ENCODE measurements at regions of chr14 and their contacts with region 1.

Region 1: DNA sequence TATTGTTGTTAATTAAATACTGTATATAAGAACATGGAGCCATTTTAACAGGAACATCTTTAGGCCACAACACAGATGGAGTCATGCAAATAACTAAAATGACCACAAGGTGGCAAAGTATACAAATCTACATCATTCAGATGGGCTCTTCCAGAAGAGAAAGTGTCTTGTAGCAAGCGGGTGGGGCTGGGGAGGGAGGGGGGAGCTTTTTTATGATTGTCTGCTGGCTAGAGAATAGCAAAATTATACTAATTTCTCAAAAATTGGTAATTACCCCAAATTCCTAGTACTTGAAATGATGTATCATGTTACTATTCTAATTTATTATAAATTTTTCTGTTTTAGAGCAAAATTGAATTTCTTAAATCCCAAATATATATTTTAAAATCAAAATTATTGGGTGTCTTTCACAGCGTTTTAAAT is 378.7 kb downstream of the PRKD1 start:
- DNase-seq: no peak
- H3K4me3 Mint-ChIP-seq: no peak overlapping the region
- H3K27ac Mint-ChIP-seq: no peak overlapping the region
- H3K4me1 Mint-ChIP-seq: no peaks in the 10 kb centered on the region
- H3K27me3 Mint-ChIP-seq: no peaks in the 10 kb centered on the region

Region 2: GRCh38 chr14:29321646-29322045 is 227.3 kb before region 1 on chr14:
- CTCF ChIA-PET with region 1: no interaction called
- intact Hi-C with region 1: no loop called
- DNase-seq: no peak
- H3K4me3 Mint-ChIP-seq: no peak overlapping the region
- H3K27ac Mint-ChIP-seq: no peak overlapping the region
- H3K4me1 Mint-ChIP-seq: no peaks in the 10 kb centered on the region
- H3K27me3 Mint-ChIP-seq: no peaks in the 10 kb centered on the region

Region 3: GRCh38 chr14:29518335-29518734 is 30.6 kb before region 1 on chr14:
- CTCF ChIA-PET with region 1: no interaction called
- intact Hi-C with region 1: no loop called
- DNase-seq: no peak
- H3K4me3 Mint-ChIP-seq: no peak overlapping the region
- H3K27ac Mint-ChIP-seq: no peak overlapping the region
- H3K4me1 Mint-ChIP-seq: no peaks in the 10 kb centered on the region
- H3K27me3 Mint-ChIP-seq: no peaks in the 10 kb centered on the region

Region 4: GRCh38 chr14:30214461-30215090 is 665.6 kb after region 1 on chr14:
- CTCF ChIA-PET with region 1: interaction called, 4 read pairs
- intact Hi-C with region 1: loop called (anchors 1 kb)
- DNase-seq: peak; percentile 6
- H3K4me3 Mint-ChIP-seq: no peak overlapping the region
- H3K27ac Mint-ChIP-seq: no peak overlapping the region
- H3K4me1 Mint-ChIP-seq: no peaks in the 10 kb centered on the region
- H3K27me3 Mint-ChIP-seq: no peaks in the 10 kb centered on the region

Region 5: GRCh38 chr14:30443368-30444007 is 894.5 kb after region 1 on chr14:
- CTCF ChIA-PET with region 1: no interaction called
- intact Hi-C with region 1: loop called (anchors 10 kb)
- DNase-seq: no peak
- H3K4me3 Mint-ChIP-seq: no peak overlapping the region
- H3K27ac Mint-ChIP-seq: no peak overlapping the region
- H3K4me1 Mint-ChIP-seq: no peaks in the 10 kb centered on the region
- H3K27me3 Mint-ChIP-seq: peaks cover 2% of the 10 kb centered on the region

Measured in activated naive CD4-positive, alpha-beta T cell treated with anti-CD3 and anti-CD28 coated beads for 36 hours (primary cell).